Transverse colon (tissue), 4 donors: ENCODE measurements at regions of chr1 and their contacts with region 1.

Region 1: GRCh38 chr1:203702130-203702577 is 62.8 kb upstream of the LAX1 start:
- DNase-seq: peak; percentile 70
- H3K4me3 ChIP-seq: no peak overlapping the region
- H3K27ac ChIP-seq: peak overlapping the region; percentile 58 to 80 (median 64)
- H3K4me1 ChIP-seq: peaks cover 0 to 25% (median 5%) of the 10 kb centered on the region in 4 donors
- H3K27me3 ChIP-seq: no peaks in the 10 kb centered on the region
- CTCF ChIP-seq: peak; percentile 74 to 96 (median 82)
- EP300 ChIP-seq: no peak
- POLR2A ChIP-seq: no peak

Region 2: GRCh38 chr1:203216274-203217138 is 485.6 kb before region 1 on chr1:
- in situ Hi-C with region 1: no loop called
- intact Hi-C with region 1: no loop called
- DNase-seq: peak; percentile 42
- H3K4me3 ChIP-seq: no peak overlapping the region
- H3K27ac ChIP-seq: no peak overlapping the region
- H3K4me1 ChIP-seq: no peaks in the 10 kb centered on the region
- H3K27me3 ChIP-seq: peaks cover 4% of the 10 kb centered on the region
- CTCF ChIP-seq: peak; percentile 64 to 78 (median 74)
- EP300 ChIP-seq: no peak
- POLR2A ChIP-seq: no peak

Region 3: DNA sequence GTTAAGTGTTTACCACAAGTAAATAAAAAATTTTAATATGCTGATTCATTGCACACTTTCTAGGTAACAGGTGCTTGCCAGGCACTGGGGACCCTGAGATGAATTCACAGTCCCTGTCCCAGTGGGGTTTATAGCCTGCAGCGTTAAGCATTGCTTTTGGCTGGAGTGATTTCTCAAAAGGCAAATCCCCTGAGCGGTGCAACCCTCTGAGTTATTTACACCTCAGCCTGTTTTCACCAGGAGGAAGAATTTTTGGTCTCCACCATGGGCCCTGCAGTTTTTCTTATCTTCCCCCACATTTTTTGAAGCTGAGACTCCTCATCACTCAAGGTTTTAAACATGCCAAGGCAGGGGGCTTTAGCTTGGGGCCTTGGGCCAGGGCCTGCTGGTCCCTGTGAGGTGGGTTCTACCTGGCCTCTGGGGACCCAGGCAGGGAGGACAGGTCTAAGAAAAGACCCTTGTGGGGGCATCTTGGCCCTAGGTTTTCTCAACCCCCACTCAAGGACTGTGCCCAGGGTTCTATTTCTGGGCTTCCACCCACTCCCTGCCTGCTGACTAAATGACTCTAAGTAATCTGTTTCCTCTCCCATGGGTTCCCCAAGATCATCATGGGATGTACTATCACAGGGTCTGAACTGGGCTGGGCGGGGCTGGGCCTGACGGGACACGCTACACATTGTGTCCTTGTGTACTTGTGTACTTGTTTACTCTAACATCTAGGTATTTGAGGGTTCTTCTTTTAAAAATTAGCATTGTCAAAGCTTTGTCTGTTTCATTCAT is 462.4 kb before region 1 on chr1:
- in situ Hi-C with region 1: loop called in 1 of 4 experiments (anchors 25 kb)
- intact Hi-C with region 1: no loop called
- DNase-seq: no peak
- H3K4me3 ChIP-seq: no peak overlapping the region
- H3K27ac ChIP-seq: no peak overlapping the region
- H3K4me1 ChIP-seq: no peaks in the 10 kb centered on the region
- H3K27me3 ChIP-seq: peaks cover 20% of the 10 kb centered on the region
- CTCF ChIP-seq: no peak
- EP300 ChIP-seq: no peak
- POLR2A ChIP-seq: no peak

Region 4: DNA sequence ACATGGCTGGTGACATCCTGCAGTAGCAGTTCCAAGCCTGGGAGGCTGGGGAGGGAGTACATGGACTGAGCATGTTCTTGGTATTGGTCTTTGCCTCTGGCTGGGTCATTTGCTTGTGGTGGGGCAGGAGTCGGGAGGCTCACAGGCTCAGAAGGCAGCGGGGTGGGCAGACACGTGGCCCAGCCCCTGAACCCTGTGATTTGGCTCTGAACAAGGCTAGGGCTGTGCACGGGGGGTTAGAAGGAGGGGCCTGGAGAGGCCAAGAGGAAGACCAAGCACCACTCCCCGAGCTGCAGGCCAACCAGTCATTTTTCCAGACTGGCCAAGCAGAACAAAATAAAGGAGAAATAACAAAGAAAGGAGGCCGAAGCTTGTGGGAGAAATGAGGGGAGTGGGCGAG is 236.2 kb before region 1 on chr1:
- in situ Hi-C with region 1: no loop called
- intact Hi-C with region 1: no loop called
- DNase-seq: no peak
- H3K4me3 ChIP-seq: no peak overlapping the region
- H3K27ac ChIP-seq: peak overlapping the region; percentile 81 to 87 (median 84)
- H3K4me1 ChIP-seq: peaks cover 17 to 45% (median 33%) of the 10 kb centered on the region in 4 donors
- H3K27me3 ChIP-seq: no peaks in the 10 kb centered on the region
- CTCF ChIP-seq: peak in 1 of 5 experiments; percentile 8
- EP300 ChIP-seq: no peak
- POLR2A ChIP-seq: no peak

Region 5: GRCh38 chr1:203504397-203505250 is 197.5 kb before region 1 on chr1:
- in situ Hi-C with region 1: loop called in 3 of 4 experiments (anchors 5 to 10 kb)
- intact Hi-C with region 1: loop called (anchors 2 kb)
- DNase-seq: peak; percentile 85
- H3K4me3 ChIP-seq: no peak overlapping the region
- H3K27ac ChIP-seq: peak overlapping the region in 3 of 4 donors; percentile 33 to 47 (median 43)
- H3K4me1 ChIP-seq: peaks cover 13 to 25% (median 15%) of the 10 kb centered on the region in 4 donors
- H3K27me3 ChIP-seq: no peaks in the 10 kb centered on the region
- CTCF ChIP-seq: peak; percentile 80 to 84 (median 84)
- EP300 ChIP-seq: no peak
- POLR2A ChIP-seq: no peak

Region 6: DNA sequence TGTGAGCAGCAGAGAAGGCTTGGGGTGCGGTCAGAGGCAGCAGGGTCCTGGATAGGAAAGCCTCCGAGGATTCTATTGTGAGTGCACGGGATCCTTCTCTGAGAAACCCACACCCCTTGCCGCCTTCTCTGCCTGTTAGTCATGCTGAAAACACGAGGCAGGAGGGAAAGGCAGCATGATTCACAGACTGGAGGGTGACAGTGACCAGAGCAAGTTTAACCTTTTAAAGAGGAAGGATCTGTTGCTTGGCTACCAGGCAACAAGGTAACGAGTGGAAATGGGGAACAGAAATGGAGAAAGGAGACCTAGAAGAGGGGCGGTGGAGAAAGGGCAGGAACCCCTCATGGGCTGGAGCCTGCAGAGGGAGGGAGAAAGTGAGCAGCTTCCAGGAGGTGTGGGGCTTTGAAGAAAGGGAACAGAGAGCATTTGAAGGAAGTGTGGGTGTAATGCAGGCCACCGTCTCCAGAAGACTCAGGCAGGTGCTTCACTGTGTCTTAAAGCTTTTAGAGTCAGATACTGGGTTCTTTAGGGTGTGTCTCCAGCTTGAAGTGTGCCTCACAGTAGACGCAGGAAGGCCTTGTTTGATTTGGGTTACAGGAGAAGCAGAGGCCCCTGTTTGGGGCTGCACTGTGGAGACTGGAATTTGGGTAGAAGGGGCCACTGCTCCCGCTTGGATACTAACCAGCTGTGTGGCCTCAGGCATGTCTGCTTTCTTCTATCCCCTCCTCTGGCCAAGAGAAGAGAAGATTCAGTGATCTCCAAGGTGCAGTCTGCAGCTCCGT is 189.1 kb before region 1 on chr1:
- in situ Hi-C with region 1: loop called (anchors 5 to 10 kb)
- intact Hi-C with region 1: no loop called
- DNase-seq: peak; percentile 40
- H3K4me3 ChIP-seq: no peak overlapping the region
- H3K27ac ChIP-seq: peak overlapping the region; percentile 73 to 83 (median 80)
- H3K4me1 ChIP-seq: peaks cover 10 to 32% (median 21%) of the 10 kb centered on the region in 4 donors
- H3K27me3 ChIP-seq: no peaks in the 10 kb centered on the region
- CTCF ChIP-seq: no peak
- EP300 ChIP-seq: no peak
- POLR2A ChIP-seq: no peak

Region 7: GRCh38 chr1:203526572-203526971 is 175.6 kb before region 1 on chr1:
- in situ Hi-C with region 1: no loop called
- intact Hi-C with region 1: no loop called
- DNase-seq: no peak
- H3K4me3 ChIP-seq: no peak overlapping the region
- H3K27ac ChIP-seq: peak overlapping the region in 1 of 4 donors; percentile 14
- H3K4me1 ChIP-seq: peaks cover 0 to 13% (median 6%) of the 10 kb centered on the region in 4 donors
- H3K27me3 ChIP-seq: no peaks in the 10 kb centered on the region
- CTCF ChIP-seq: no peak
- EP300 ChIP-seq: no peak
- POLR2A ChIP-seq: no peak

Region 8: DNA sequence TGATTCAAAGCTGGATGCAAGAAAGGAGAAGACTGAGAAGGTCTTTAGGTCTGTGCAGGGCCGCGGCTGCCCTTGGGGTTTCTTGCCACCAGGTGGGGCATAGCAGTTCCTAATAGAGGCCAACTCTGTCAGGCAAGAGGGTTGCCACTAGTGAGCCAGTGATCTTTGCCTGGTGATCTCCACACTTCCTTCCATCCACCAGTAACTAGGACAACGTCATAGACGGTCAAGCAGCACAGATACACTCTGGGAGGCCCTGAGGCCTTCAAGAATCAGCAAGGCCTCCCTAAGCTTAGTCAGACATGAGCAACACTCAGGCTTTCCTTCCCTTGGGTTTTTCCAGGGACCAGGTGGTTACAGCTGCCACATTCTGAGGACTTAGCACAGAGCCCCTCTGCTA is 108.4 kb before region 1 on chr1:
- in situ Hi-C with region 1: loop called in 3 of 4 experiments (anchors 10 kb)
- intact Hi-C with region 1: no loop called
- DNase-seq: peak; percentile 56
- H3K4me3 ChIP-seq: no peak overlapping the region
- H3K27ac ChIP-seq: no peak overlapping the region
- H3K4me1 ChIP-seq: peaks cover 0 to 26% (median 7%) of the 10 kb centered on the region in 4 donors
- H3K27me3 ChIP-seq: no peaks in the 10 kb centered on the region
- CTCF ChIP-seq: peak; percentile 36 to 70 (median 54)
- EP300 ChIP-seq: no peak
- POLR2A ChIP-seq: no peak